ENCODE measurements at regions of chr1 and their contacts with region 1.

Region 1: GRCh38 chr1:208772891-208773290 is 528.7 kb upstream of the PLXNA2 start:
- DNase-seq: no peak
- H3K4me3 ChIP-seq: no peak overlapping the region
- H3K27ac ChIP-seq: no peak overlapping the region
- H3K4me1 ChIP-seq: no peaks in the 10 kb centered on the region
- H3K27me3 ChIP-seq: no peaks in the 10 kb centered on the region
- CTCF ChIP-seq: no peak

Region 2: GRCh38 chr1:208717525-208717924 is 55.4 kb before region 1 on chr1:
- intact Hi-C with region 1: loop called (anchors 10 kb)
- DNase-seq: no peak
- H3K4me3 ChIP-seq: no peak overlapping the region
- H3K27ac ChIP-seq: no peak overlapping the region
- H3K4me1 ChIP-seq: no peaks in the 10 kb centered on the region
- H3K27me3 ChIP-seq: no peaks in the 10 kb centered on the region
- CTCF ChIP-seq: no peak